BJ (cell line): ENCODE measurements at regions of chr6 and their contacts with region 1.

Region 1: GRCh38 chr6:1255636-1256365 is 56.1 kb upstream of the FOXQ1 start:
- DNase-seq: no peak
- H3K4me3 ChIP-seq: no peak overlapping the region
- H3K27me3 ChIP-seq: no peaks in the 10 kb centered on the region
- CTCF ChIP-seq: no peak

Region 2: GRCh38 chr6:1244941-1245340 is 10.9 kb before region 1 on chr6:
- CTCF ChIA-PET with region 1: interaction called, 10 read pairs
- POLR2A ChIA-PET with region 1: no interaction called
- DNase-seq: peak; percentile 70
- H3K4me3 ChIP-seq: no peak overlapping the region
- H3K27me3 ChIP-seq: no peaks in the 10 kb centered on the region
- CTCF ChIP-seq: no peak